H1 (cell line): ENCODE measurements at regions of chr12 and their contacts with region 1.

Region 1: GRCh38 chr12:54207484-54208294 is 18.9 kb upstream of the SMUG1 start:
- DNase-seq: peak in 1 of 2 experiments; percentile 99
- H3K4me3 ChIP-seq: no peak overlapping the region
- H3K27ac ChIP-seq: no peak overlapping the region
- H3K4me1 ChIP-seq: peaks cover 0 to 5% (median under 1%) of the 10 kb centered on the region in 4 experiments; a peak in 2 of 7 replicates
- H3K27me3 ChIP-seq: peaks cover 8 to 46% (median 37%) of the 10 kb centered on the region in 4 experiments; a peak in 6 of 7 replicates
- CTCF ChIP-seq: peak; percentile 98 to 99 (median 99)
- EP300 ChIP-seq: no peak
- POLR2A ChIP-seq: no peak
- RAD21 ChIP-seq: peak; percentile 95 to 98

Region 2: DNA sequence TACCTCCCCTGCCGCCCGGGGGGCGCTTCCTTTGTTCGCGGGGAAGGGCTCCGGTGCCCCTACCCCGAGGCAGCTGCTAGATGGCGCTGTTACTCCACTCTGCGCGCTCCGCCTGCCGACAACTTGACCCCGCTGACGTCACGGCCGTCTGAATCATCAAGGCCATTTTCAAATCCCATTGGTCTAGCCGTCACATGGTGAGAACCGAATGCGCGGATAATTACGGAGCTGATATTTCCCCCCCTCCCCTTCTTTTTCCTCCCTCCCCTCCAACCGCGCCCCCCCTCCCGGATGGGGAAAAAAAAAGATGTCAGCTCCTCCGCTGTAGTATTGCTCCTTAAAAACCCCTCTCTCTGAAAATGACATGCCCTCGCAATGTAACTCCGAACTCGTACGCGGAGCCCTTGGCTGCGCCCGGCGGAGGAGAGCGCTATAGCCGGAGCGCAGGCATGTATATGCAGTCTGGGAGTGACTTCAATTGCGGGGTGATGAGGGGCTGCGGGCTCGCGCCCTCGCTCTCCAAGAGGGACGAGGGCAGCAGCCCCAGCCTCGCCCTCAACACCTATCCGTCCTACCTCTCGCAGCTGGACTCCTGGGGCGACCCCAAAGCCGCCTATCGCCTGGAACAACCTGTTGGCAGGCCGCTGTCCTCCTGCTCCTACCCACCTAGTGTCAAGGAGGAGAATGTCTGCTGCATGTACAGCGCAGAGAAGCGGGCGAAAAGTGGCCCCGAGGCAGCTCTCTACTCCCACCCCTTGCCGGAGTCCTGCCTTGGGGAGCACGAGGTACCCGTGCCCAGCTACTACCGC is 222.6 kb before region 1 on chr12 and contains the start of gene HOXC10:
- CTCF ChIA-PET with region 1: interaction called, 62 read pairs
- POLR2A ChIA-PET with region 1: no interaction called
- DNase-seq: peak in 1 of 2 experiments; percentile 93
- H3K4me3 ChIP-seq: peak within 1 kb of the TSS in 1 of 4 experiments; percentile 38; a peak in 2 of 8 replicates
- H3K27ac ChIP-seq: no peak within 1 kb of the TSS
- H3K4me1 ChIP-seq: peaks cover 0 to 6% (median 3%) of the 10 kb centered on the region in 4 experiments; a peak in 3 of 7 replicates
- H3K27me3 ChIP-seq: peaks cover 92 to 99% (median 97%) of the 10 kb centered on the region in 4 experiments
- CTCF ChIP-seq: peak; percentile 84 to 97 (median 89)
- EP300 ChIP-seq: 0 out of 3 replicates have a peak, but pooled peaks of 1 of the 2 experiments have one; percentile 18
- POLR2A ChIP-seq: no peak
- RAD21 ChIP-seq: peak; percentile 87 to 89
- total RNA-seq, gene HOXC10: not detected in 2 replicates

Region 3: GRCh38 chr12:54005853-54006686 is 201.6 kb before region 1 on chr12:
- CTCF ChIA-PET with region 1: interaction called, 154 read pairs
- POLR2A ChIA-PET with region 1: interaction called, 3 read pairs
- DNase-seq: peak; percentile 50 to 98
- H3K4me3 ChIP-seq: no peak overlapping the region
- H3K27ac ChIP-seq: no peak overlapping the region
- H3K4me1 ChIP-seq: peaks cover 0 to 4% (median 0%) of the 10 kb centered on the region in 4 experiments; a peak in 2 of 7 replicates
- H3K27me3 ChIP-seq: peaks cover 97 to 100% (median 100%) of the 10 kb centered on the region in 4 experiments
- CTCF ChIP-seq: peak; percentile 88 to 97 (median 89)
- EP300 ChIP-seq: no peak
- POLR2A ChIP-seq: no peak
- RAD21 ChIP-seq: peak; percentile 98

Region 4: GRCh38 chr12:54032627-54033100 is 175.0 kb before region 1 on chr12 and contains the start of gene HOXC5:
- CTCF ChIA-PET with region 1: interaction called, 339 read pairs
- POLR2A ChIA-PET with region 1: no interaction called
- DNase-seq: peak; percentile 68 to 93
- H3K4me3 ChIP-seq: peak within 1 kb of the TSS in 1 of 4 experiments; percentile 9; a peak in 2 of 8 replicates
- H3K27ac ChIP-seq: no peak within 1 kb of the TSS
- H3K4me1 ChIP-seq: peaks cover 0 to 9% (median 2%) of the 10 kb centered on the region in 4 experiments; a peak in 5 of 7 replicates
- H3K27me3 ChIP-seq: peaks cover 94 to 100% (median 98%) of the 10 kb centered on the region in 4 experiments
- CTCF ChIP-seq: peak; percentile 85 to 93 (median 90)
- EP300 ChIP-seq: no peak
- POLR2A ChIP-seq: no peak
- RAD21 ChIP-seq: peak; percentile 96 to 97
- total RNA-seq, gene HOXC5: not detected in 2 replicates

Region 5: GRCh38 chr12:54134850-54135249 is 72.8 kb before region 1 on chr12:
- CTCF ChIA-PET with region 1: interaction called, 34 read pairs
- POLR2A ChIA-PET with region 1: interaction called, 3 read pairs
- DNase-seq: no peak
- H3K4me3 ChIP-seq: no peak overlapping the region
- H3K27ac ChIP-seq: no peak overlapping the region
- H3K4me1 ChIP-seq: peaks cover 0 to 3% (median 1%) of the 10 kb centered on the region in 4 experiments; a peak in 2 of 7 replicates
- H3K27me3 ChIP-seq: peaks cover 25 to 89% (median 67%) of the 10 kb centered on the region in 4 experiments
- CTCF ChIP-seq: peak in 1 of 3 experiments; percentile 37; a peak in 1 of 4 replicates
- EP300 ChIP-seq: no peak
- POLR2A ChIP-seq: no peak
- RAD21 ChIP-seq: peak; percentile 31 to 50; a peak in 2 of 4 replicates

Region 6: GRCh38 chr12:54173066-54173726 is 34.5 kb before region 1 on chr12:
- CTCF ChIA-PET with region 1: interaction called, 32 read pairs
- POLR2A ChIA-PET with region 1: no interaction called
- DNase-seq: peak in 1 of 2 experiments; percentile 66
- H3K4me3 ChIP-seq: peak overlapping the region; percentile 34 to 58 (median 42); a peak in 5 of 8 replicates
- H3K27ac ChIP-seq: no peak overlapping the region
- H3K4me1 ChIP-seq: peaks cover 0 to 8% (median 3%) of the 10 kb centered on the region in 4 experiments; a peak in 4 of 7 replicates
- H3K27me3 ChIP-seq: peaks cover 42 to 57% (median 51%) of the 10 kb centered on the region in 4 experiments
- CTCF ChIP-seq: no peak
- EP300 ChIP-seq: no peak
- POLR2A ChIP-seq: no peak
- RAD21 ChIP-seq: no peak

Region 7: DNA sequence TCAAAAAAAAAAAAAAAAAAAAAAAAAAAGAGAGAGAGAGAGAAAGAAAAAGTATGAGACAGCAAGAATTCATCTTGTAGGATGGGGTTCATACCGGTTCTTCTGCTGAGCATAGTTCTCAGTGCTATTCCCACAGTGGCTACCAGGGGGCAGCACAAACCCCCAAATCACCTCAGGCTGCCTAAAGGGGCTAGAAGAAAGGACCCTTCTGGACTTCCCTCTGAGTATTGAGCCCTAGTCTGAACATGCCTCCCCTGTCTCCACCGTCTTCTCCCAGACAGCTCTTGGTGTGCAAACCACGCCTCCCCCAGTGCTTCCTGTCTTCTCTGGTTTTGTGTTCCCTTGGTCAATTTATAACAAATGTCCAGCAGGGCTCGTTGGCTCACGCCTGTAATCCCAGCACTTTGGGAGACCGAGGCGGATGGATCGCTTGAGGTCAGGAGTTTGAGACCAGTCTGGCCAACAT is 12.4 kb after region 1 on chr12:
- CTCF ChIA-PET with region 1: interaction called, 46 read pairs
- POLR2A ChIA-PET with region 1: interaction called, 4 read pairs
- DNase-seq: peak in 1 of 2 experiments; percentile 94
- H3K4me3 ChIP-seq: no peak overlapping the region
- H3K27ac ChIP-seq: no peak overlapping the region
- H3K4me1 ChIP-seq: peaks cover 0 to 20% (median 15%) of the 10 kb centered on the region in 4 experiments; a peak in 6 of 7 replicates
- H3K27me3 ChIP-seq: peaks cover 1 to 36% (median 25%) of the 10 kb centered on the region in 4 experiments; a peak in 6 of 7 replicates
- CTCF ChIP-seq: peak; percentile 73 to 90 (median 84)
- EP300 ChIP-seq: no peak
- POLR2A ChIP-seq: no peak
- RAD21 ChIP-seq: peak; percentile 78 to 84

Region 8: GRCh38 chr12:54251667-54252284 is 44.1 kb after region 1 on chr12:
- CTCF ChIA-PET with region 1: no interaction called
- POLR2A ChIA-PET with region 1: no interaction called
- DNase-seq: no peak
- H3K4me3 ChIP-seq: no peak overlapping the region
- H3K27ac ChIP-seq: no peak overlapping the region
- H3K4me1 ChIP-seq: no peaks in the 10 kb centered on the region
- H3K27me3 ChIP-seq: no peaks in the 10 kb centered on the region
- CTCF ChIP-seq: peak in 2 of 3 experiments; percentile 41 to 55; a peak in 2 of 4 replicates
- EP300 ChIP-seq: no peak
- POLR2A ChIP-seq: no peak
- RAD21 ChIP-seq: peak; percentile 56 to 62

Region 9: GRCh38 chr12:54306925-54307741 is 99.4 kb after region 1 on chr12:
- CTCF ChIA-PET with region 1: no interaction called
- POLR2A ChIA-PET with region 1: no interaction called
- DNase-seq: no peak
- H3K4me3 ChIP-seq: no peak overlapping the region
- H3K27ac ChIP-seq: no peak overlapping the region
- H3K4me1 ChIP-seq: peaks cover 4 to 18% (median 12%) of the 10 kb centered on the region in 4 experiments
- H3K27me3 ChIP-seq: no peaks in the 10 kb centered on the region
- CTCF ChIP-seq: no peak
- EP300 ChIP-seq: no peak
- POLR2A ChIP-seq: no peak
- RAD21 ChIP-seq: no peak